ENCODE measurements at regions of chr20 and their contacts with region 1.

Region 1: DNA sequence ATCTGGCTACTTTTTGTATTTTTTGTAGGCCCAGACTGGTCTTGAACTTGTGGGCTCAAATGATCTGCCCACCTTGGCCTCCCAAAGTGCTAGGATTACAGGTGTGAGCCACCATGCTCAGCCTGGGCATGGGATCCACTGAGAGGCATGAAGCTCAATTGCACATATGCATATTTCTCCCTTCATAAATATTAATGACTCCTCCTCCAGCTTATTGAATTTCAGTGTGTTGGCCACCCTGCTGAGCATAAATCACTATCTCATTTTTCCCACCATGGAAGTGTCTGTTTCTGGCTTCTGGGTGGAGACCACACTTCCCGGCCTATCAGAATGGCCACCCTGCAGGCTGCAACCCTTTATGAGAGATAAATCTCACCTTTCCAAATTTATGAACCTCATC is 53.6 kb upstream of the KIF16B start:
- DNase-seq: no peak
- ATAC-seq: no peak
- H3K4me3 ChIP-seq: no peak overlapping the region
- H3K4me3 Mint-ChIP-seq: no peak overlapping the region
- H3K27ac ChIP-seq: no peak overlapping the region
- H3K27ac Mint-ChIP-seq: no peak overlapping the region
- H3K4me1 ChIP-seq: no peaks in the 10 kb centered on the region
- H3K4me1 Mint-ChIP-seq: peaks cover 0 to 1% (median 0%) of the 10 kb centered on the region in 7 donors
- H3K27me3 ChIP-seq: no peaks in the 10 kb centered on the region
- H3K27me3 Mint-ChIP-seq: peaks cover 0 to 7% (median 0%) of the 10 kb centered on the region in 5 donors

Region 2: GRCh38 chr20:14700639-14700960 is 1926.2 kb before region 1 on chr20:
- CTCF ChIA-PET with region 1: no interaction called
- POLR2A ChIA-PET with region 1: no interaction called
- intact Hi-C with region 1: no loop called
- DNase-seq: no peak
- ATAC-seq: no peak
- H3K4me3 ChIP-seq: no peak overlapping the region
- H3K4me3 Mint-ChIP-seq: no peak overlapping the region
- H3K27ac ChIP-seq: no peak overlapping the region
- H3K27ac Mint-ChIP-seq: no peak overlapping the region
- H3K4me1 ChIP-seq: no peaks in the 10 kb centered on the region
- H3K4me1 Mint-ChIP-seq: no peaks in the 10 kb centered on the region
- H3K27me3 ChIP-seq: no peaks in the 10 kb centered on the region
- H3K27me3 Mint-ChIP-seq: no peaks in the 10 kb centered on the region

Region 3: DNA sequence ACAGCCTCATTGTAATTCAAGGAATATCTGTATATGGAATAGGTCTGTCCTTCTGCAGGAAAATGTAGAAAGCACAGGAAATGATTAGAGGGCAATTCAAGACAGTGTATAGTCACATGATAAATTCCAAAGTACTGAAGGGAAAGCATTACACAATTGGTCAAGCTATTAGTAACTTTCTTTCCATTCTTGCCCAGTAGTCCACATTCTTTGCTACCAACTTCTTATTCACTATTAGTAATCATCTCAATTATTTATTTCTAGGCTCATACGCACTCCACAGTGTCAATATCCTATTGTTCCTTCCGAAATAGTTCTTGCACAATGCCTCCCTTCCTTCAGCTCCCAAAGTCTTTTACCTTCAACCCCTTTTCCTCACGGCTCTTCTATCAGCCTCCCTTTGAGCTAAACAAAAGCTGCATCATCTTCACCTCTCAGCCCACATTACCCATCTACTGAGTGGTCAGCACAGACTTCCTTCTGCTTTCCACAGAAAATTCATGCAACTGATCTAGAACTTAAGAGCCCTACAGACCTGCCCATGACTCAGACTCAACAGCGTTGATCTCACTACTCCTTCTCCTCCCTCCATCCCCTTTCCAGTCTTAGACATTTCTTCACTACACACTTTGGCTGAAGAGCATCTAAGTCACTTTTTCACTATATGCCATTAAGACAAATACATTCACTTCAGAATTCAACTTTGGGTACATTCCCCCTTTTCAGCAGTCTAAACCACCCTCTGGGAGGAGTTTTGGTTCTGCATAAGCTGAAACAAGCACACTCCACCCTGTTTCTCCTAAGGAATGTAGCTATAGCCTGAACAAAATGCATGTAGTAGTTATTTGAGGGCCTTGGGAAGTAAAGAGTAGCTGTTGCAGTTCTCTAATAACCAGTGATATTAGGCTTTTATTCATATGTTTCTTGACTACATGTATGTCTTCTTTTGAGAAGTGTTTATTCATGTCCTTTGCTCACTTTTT is 211.5 kb before region 1 on chr20:
- CTCF ChIA-PET with region 1: no interaction called
- POLR2A ChIA-PET with region 1: no interaction called
- intact Hi-C with region 1: no loop called
- DNase-seq: no peak
- ATAC-seq: no peak
- H3K4me3 ChIP-seq: no peak overlapping the region
- H3K4me3 Mint-ChIP-seq: no peak overlapping the region
- H3K27ac ChIP-seq: no peak overlapping the region
- H3K27ac Mint-ChIP-seq: no peak overlapping the region
- H3K4me1 ChIP-seq: no peaks in the 10 kb centered on the region
- H3K4me1 Mint-ChIP-seq: no peaks in the 10 kb centered on the region
- H3K27me3 ChIP-seq: no peaks in the 10 kb centered on the region
- H3K27me3 Mint-ChIP-seq: no peaks in the 10 kb centered on the region

Region 4: DNA sequence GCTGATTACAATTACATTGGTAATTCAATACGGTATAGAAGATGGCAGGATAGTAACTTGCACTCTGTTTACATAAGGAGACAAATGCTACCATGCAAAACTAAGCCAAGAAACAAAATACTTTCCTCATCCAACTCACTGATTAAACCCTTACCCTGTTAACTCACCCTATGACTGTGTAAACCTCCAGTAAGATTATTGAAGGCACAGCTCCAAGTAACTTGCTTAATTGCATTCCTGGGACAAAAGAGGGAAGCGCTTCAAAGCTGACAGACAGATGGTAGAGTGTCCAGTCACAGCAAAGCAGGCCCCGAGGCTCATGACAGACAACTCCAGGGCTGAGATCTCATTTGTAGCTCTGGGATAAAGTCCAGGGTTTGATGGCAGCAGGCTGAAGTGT is 46.7 kb before region 1 on chr20:
- CTCF ChIA-PET with region 1: no interaction called
- POLR2A ChIA-PET with region 1: no interaction called
- intact Hi-C with region 1: loop called in 1 of 2 experiments (anchors 1 kb)
- DNase-seq: no peak
- ATAC-seq: no peak
- H3K4me3 ChIP-seq: no peak overlapping the region
- H3K4me3 Mint-ChIP-seq: no peak overlapping the region
- H3K27ac ChIP-seq: no peak overlapping the region
- H3K27ac Mint-ChIP-seq: no peak overlapping the region
- H3K4me1 ChIP-seq: peaks cover 0 to 6% of the 10 kb centered on the region in 2 donors
- H3K4me1 Mint-ChIP-seq: peaks cover 3 to 11% (median 5%) of the 10 kb centered on the region in 7 donors
- H3K27me3 ChIP-seq: no peaks in the 10 kb centered on the region
- H3K27me3 Mint-ChIP-seq: peaks cover 14 to 22% (median 18%) of the 10 kb centered on the region in 5 donors

Measured in naive thymus-derived CD4-positive, alpha-beta T cell (primary cell).